ENCODE measurements at regions of chr4 and their contacts with region 1.

Region 1: DNA sequence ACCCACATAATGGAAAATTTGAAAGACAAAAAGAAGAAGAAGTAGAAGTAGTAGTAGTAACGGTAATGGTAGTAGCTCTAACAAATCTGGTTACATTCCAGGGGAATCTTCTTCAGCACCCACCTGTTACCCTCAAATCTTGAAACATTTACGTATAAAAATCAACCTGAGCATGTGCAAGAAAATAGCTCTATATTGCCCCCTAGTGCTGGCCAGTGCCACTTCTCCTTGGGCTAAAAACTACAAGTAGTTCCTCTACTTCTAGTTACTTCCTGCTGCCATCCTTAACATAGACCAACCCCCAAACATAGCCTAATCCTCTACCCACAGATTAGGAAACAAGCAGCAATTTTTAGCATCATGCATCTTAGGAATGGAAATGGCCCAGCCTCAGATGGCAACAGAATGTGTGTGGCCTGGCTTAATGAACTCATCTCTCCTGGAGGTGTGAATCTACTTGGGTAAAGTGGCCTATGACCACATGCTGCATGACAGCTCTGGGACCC is 3.1 kb downstream of the PDGFC start:
- DNase-seq: peak; percentile 82
- H3K4me3 Mint-ChIP-seq: peak overlapping the region; percentile 96
- H3K27ac Mint-ChIP-seq: peak overlapping the region; percentile 25
- H3K4me1 Mint-ChIP-seq: peaks cover 41% of the 10 kb centered on the region
- H3K27me3 Mint-ChIP-seq: no peaks in the 10 kb centered on the region
- CTCF ChIP-seq: peak; percentile 77

Region 2: DNA sequence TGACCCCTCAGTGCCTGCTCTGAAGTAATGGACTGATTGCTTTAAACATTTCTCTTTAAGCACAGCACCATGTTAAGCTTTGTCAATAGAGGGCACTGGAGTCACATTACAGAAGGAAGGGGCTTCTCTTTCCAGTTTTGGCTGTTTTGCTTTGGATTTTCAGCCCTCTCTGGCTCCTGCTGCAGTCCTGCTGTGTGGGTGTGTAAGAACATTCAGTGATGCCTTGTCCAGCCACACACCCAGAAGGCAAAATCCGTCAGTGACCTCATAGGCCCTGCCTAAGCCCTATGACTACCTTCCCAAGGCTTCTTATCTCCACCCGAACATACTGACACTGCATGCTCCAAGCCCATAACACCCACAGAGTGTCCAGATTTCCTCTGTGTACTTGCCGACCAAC is 799.5 kb before region 1 on chr4:
- CTCF ChIA-PET with region 1: interaction called, 4 read pairs
- POLR2A ChIA-PET with region 1: interaction called, 3 read pairs
- intact Hi-C with region 1: loop called (anchors 1 kb)
- DNase-seq: peak; percentile 76
- H3K4me3 Mint-ChIP-seq: no peak overlapping the region
- H3K27ac Mint-ChIP-seq: peak overlapping the region; percentile 56
- H3K4me1 Mint-ChIP-seq: peaks cover 17% of the 10 kb centered on the region
- H3K27me3 Mint-ChIP-seq: no peaks in the 10 kb centered on the region
- CTCF ChIP-seq: peak; percentile 43

Region 3: GRCh38 chr4:156686120-156686519 is 282.4 kb before region 1 on chr4:
- CTCF ChIA-PET with region 1: interaction called, 10 read pairs
- POLR2A ChIA-PET with region 1: interaction called, 4 read pairs
- intact Hi-C with region 1: loop called (anchors 5 kb)
- DNase-seq: no peak
- H3K4me3 Mint-ChIP-seq: no peak overlapping the region
- H3K27ac Mint-ChIP-seq: no peak overlapping the region
- H3K4me1 Mint-ChIP-seq: peaks cover 8% of the 10 kb centered on the region
- H3K27me3 Mint-ChIP-seq: no peaks in the 10 kb centered on the region
- CTCF ChIP-seq: no peak

Region 4: DNA sequence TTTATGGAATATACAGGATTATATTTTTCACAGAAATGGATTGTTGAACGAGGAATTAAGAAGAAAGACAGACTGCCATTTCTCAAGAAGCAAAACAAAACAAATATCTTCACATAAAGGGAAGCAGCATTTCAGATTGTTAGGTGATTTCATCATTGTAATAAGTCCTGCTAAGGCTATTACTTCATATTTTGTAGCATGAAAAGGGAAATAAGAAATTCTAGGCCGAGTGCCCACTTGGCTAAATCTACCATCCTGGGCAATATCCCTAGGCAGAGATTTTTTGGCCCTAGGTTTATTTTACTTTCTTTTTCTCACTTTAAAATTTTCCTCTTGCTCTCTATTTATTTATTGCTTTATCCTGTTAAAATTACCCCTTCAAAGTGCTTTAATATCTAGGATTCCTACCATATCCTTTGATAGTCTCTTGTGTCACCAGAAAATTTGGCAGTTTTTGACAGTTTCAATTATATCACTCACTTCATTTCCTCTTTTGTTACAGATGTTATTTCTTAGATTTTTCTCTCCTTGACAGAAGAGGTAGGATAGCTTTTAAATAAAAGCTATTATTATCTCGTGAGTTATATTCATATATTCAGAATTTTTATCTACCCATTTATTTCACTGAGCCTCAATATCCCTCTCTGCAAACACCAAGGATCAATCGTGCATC is 139.2 kb before region 1 on chr4:
- CTCF ChIA-PET with region 1: interaction called, 5 read pairs
- POLR2A ChIA-PET with region 1: interaction called, 3 read pairs
- intact Hi-C with region 1: loop called (anchors 1 kb)
- DNase-seq: peak; percentile 81
- H3K4me3 Mint-ChIP-seq: peak overlapping the region; percentile 67
- H3K27ac Mint-ChIP-seq: peak overlapping the region; percentile 94
- H3K4me1 Mint-ChIP-seq: peaks cover 35% of the 10 kb centered on the region
- H3K27me3 Mint-ChIP-seq: no peaks in the 10 kb centered on the region
- CTCF ChIP-seq: no peak

Region 5: DNA sequence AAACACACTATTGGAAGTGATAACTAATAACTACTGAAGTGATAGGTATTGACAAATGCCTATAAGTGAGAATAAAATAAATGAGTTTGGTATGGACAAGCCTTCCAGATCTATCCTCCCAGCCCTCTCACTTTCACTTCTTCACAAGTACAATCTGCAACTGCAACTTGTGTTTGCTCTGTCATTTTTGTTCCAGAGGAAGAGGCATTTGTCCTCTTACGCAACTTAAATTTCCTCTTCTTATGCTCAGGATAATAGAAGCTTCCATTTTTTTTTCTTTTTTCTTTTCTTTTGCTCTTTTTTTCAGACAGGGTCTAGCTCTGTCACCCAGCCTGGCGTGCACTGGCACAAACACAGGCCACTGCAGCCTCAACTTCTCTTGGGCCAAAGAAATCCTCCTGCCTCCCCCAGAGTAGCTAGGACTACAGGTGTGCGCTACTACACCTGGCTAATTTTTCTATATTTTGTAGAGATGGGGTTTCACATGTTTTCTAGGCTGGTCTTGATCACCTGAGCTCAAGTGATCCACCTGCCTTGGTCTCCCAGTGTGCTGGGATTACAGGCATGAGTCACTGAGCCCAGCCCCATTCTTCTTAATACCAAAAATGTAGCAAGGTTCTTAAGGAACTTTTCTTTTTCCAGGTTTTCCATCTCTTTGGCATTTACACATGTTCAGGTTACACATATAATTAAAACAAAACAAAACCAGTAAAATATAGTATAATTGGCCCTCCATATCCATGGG is 70.0 kb before region 1 on chr4:
- CTCF ChIA-PET with region 1: no interaction called
- POLR2A ChIA-PET with region 1: no interaction called
- intact Hi-C with region 1: no loop called
- DNase-seq: peak; percentile 24
- H3K4me3 Mint-ChIP-seq: no peak overlapping the region
- H3K27ac Mint-ChIP-seq: peak overlapping the region; percentile 58
- H3K4me1 Mint-ChIP-seq: peaks cover 50% of the 10 kb centered on the region
- H3K27me3 Mint-ChIP-seq: no peaks in the 10 kb centered on the region
- CTCF ChIP-seq: no peak

Region 6: GRCh38 chr4:156941940-156942548 is 26.5 kb before region 1 on chr4:
- CTCF ChIA-PET with region 1: interaction called, 11 read pairs
- POLR2A ChIA-PET with region 1: interaction called, 25 read pairs
- intact Hi-C with region 1: no loop called
- DNase-seq: peak; percentile 77
- H3K4me3 Mint-ChIP-seq: no peak overlapping the region
- H3K27ac Mint-ChIP-seq: peak overlapping the region; percentile 12
- H3K4me1 Mint-ChIP-seq: peaks cover 48% of the 10 kb centered on the region
- H3K27me3 Mint-ChIP-seq: no peaks in the 10 kb centered on the region
- CTCF ChIP-seq: no peak

Region 7: GRCh38 chr4:157035471-157035870 is 66.9 kb after region 1 on chr4:
- CTCF ChIA-PET with region 1: interaction called, 12 read pairs
- POLR2A ChIA-PET with region 1: interaction called, 3 read pairs
- intact Hi-C with region 1: no loop called
- DNase-seq: no peak
- H3K4me3 Mint-ChIP-seq: no peak overlapping the region
- H3K27ac Mint-ChIP-seq: no peak overlapping the region
- H3K4me1 Mint-ChIP-seq: no peaks in the 10 kb centered on the region
- H3K27me3 Mint-ChIP-seq: no peaks in the 10 kb centered on the region
- CTCF ChIP-seq: no peak

Region 8: GRCh38 chr4:157115613-157116335 is 147.2 kb after region 1 on chr4:
- CTCF ChIA-PET with region 1: no interaction called
- POLR2A ChIA-PET with region 1: no interaction called
- intact Hi-C with region 1: no loop called
- DNase-seq: peak; percentile 58
- H3K4me3 Mint-ChIP-seq: no peak overlapping the region
- H3K27ac Mint-ChIP-seq: peak overlapping the region; percentile 60
- H3K4me1 Mint-ChIP-seq: peaks cover 15% of the 10 kb centered on the region
- H3K27me3 Mint-ChIP-seq: no peaks in the 10 kb centered on the region
- CTCF ChIP-seq: no peak

Region 9: GRCh38 chr4:157978680-157979361 is 1010.3 kb after region 1 on chr4:
- CTCF ChIA-PET with region 1: no interaction called
- POLR2A ChIA-PET with region 1: no interaction called
- intact Hi-C with region 1: loop called (anchors 10 kb)
- DNase-seq: peak; percentile 68
- H3K4me3 Mint-ChIP-seq: peak overlapping the region; percentile 48
- H3K27ac Mint-ChIP-seq: no peak overlapping the region
- H3K4me1 Mint-ChIP-seq: peaks cover 15% of the 10 kb centered on the region
- H3K27me3 Mint-ChIP-seq: no peaks in the 10 kb centered on the region
- CTCF ChIP-seq: peak; percentile 84

Region 10: DNA sequence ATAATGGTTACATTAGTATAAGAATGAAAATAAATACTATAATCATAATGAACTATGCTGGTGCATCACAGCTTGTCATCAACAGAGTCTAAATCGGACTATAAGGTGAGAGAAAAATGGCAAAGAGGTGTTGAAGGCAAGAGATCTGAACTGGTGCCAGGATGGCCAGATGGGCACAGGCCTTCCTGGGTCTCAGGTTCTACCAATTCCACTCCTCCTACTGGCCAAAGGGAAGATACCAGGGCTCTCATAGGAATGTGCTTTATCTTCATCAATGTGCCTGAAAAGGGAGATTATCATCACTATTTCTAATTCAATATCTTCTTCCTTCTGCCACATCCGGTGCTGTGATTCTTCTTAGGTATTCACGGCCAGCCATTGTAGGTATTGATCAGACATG is 1096.6 kb after region 1 on chr4:
- CTCF ChIA-PET with region 1: no interaction called
- POLR2A ChIA-PET with region 1: no interaction called
- intact Hi-C with region 1: no loop called
- DNase-seq: peak; percentile 27
- H3K4me3 Mint-ChIP-seq: no peak overlapping the region
- H3K27ac Mint-ChIP-seq: no peak overlapping the region
- H3K4me1 Mint-ChIP-seq: no peaks in the 10 kb centered on the region
- H3K27me3 Mint-ChIP-seq: no peaks in the 10 kb centered on the region
- CTCF ChIP-seq: no peak

Measured in MCF 10A (cell line).